PC-3 (cell line): ENCODE measurements at regions of chr2 and their contacts with region 1.

Region 1: DNA sequence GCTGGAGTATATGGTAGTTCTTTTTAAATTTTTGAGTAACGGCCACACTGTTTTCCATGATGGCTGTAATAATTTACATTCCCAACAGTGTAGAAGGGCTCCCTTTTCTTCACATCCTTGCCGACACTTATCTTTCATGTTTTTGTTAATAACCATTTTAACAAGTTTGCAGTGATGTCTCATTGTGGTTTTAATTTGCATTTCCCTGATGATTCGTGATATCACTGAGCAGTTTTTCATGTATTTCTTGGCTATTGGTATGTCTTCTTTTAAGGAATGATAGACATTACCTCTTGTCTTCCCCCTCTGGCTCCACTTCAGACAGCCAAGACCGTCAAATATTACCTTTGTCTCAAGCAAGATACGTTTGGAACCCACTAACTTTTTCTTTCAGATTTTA is 371.1 kb upstream of the NRP2 start:
- DNase-seq: no peak
- ATAC-seq: no peak
- H3K4me3 ChIP-seq: no peak overlapping the region
- H3K27ac ChIP-seq: no peak overlapping the region
- H3K4me1 ChIP-seq: no peaks in the 10 kb centered on the region
- H3K27me3 ChIP-seq: no peaks in the 10 kb centered on the region
- CTCF ChIP-seq: no peak

Region 2: DNA sequence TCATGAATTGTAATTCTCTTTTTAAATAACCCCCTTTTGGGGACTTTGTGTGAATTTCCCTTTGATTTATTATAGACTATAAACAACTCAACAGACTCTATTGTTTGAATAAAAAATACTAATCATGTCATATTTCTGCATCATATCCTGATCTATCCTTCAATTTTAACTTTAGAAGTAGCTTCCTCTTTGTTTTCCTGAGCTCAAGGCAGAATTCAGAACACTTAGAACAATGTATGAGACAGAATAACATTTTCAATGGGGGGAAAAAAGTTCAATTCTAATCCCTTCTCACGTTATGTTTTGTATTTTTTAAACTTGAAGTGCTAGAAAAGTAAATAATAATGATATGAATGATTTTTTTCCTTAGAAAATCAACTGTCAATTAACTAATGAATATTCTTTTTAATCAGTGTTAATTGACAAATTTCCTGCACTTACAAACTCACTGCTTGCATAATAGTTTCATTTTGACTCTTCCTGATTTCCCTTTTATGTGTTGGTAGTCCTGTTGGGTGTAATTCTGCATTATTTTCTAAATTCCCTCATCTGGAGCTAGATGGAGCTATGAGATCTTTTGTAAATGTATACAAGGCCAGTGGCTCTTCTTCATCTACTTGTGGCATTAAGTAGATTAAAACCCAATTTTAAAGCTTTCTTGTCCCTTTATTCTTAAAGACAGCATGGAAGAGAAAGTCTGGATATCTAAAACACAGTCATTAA is 439.8 kb before region 1 on chr2:
- CTCF ChIA-PET with region 1: no interaction called
- POLR2A ChIA-PET with region 1: no interaction called
- intact Hi-C with region 1: loop called (anchors 10 kb)
- DNase-seq: peak; percentile 57
- ATAC-seq: peak; percentile 80
- H3K4me3 ChIP-seq: no peak overlapping the region
- H3K27ac ChIP-seq: no peak overlapping the region
- H3K4me1 ChIP-seq: no peaks in the 10 kb centered on the region
- H3K27me3 ChIP-seq: no peaks in the 10 kb centered on the region
- CTCF ChIP-seq: peak; percentile 67

Region 3: GRCh38 chr2:204892506-204893255 is 418.5 kb before region 1 on chr2:
- CTCF ChIA-PET with region 1: no interaction called
- POLR2A ChIA-PET with region 1: no interaction called
- intact Hi-C with region 1: no loop called
- DNase-seq: peak; percentile 24
- ATAC-seq: no peak
- H3K4me3 ChIP-seq: no peak overlapping the region
- H3K27ac ChIP-seq: no peak overlapping the region
- H3K4me1 ChIP-seq: no peaks in the 10 kb centered on the region
- H3K27me3 ChIP-seq: no peaks in the 10 kb centered on the region
- CTCF ChIP-seq: no peak

Region 4: GRCh38 chr2:205161156-205161839 is 149.9 kb before region 1 on chr2:
- CTCF ChIA-PET with region 1: no interaction called
- POLR2A ChIA-PET with region 1: no interaction called
- intact Hi-C with region 1: no loop called
- DNase-seq: no peak
- ATAC-seq: peak; percentile 50; the same call in 1 of the 2 replicates
- H3K4me3 ChIP-seq: no peak overlapping the region
- H3K27ac ChIP-seq: no peak overlapping the region
- H3K4me1 ChIP-seq: no peaks in the 10 kb centered on the region
- H3K27me3 ChIP-seq: no peaks in the 10 kb centered on the region
- CTCF ChIP-seq: no peak

Region 5: DNA sequence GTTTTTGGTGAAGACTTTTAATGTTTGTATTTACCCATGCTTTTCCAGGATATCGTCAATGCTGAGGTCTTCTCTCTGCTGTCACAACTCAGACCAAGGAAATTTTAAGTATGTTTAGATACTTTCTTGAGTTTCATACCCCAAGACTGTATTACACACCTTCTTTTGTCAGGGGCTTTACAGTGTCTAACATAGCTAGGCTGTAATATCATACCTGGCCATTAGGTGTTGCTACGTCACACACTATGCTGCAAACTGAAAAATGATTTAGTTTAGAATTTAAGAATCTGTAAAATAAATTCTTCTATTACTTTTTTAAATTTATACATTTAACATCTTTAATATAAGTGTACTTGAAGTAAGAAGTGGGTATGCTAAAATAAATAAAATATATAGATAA is 12.7 kb after region 1 on chr2:
- CTCF ChIA-PET with region 1: no interaction called
- POLR2A ChIA-PET with region 1: no interaction called
- intact Hi-C with region 1: no loop called
- DNase-seq: peak; percentile 54
- ATAC-seq: peak; percentile 53; the same call in 1 of the 2 replicates
- H3K4me3 ChIP-seq: no peak overlapping the region
- H3K27ac ChIP-seq: no peak overlapping the region
- H3K4me1 ChIP-seq: no peaks in the 10 kb centered on the region
- H3K27me3 ChIP-seq: no peaks in the 10 kb centered on the region
- CTCF ChIP-seq: peak; percentile 65

Region 6: DNA sequence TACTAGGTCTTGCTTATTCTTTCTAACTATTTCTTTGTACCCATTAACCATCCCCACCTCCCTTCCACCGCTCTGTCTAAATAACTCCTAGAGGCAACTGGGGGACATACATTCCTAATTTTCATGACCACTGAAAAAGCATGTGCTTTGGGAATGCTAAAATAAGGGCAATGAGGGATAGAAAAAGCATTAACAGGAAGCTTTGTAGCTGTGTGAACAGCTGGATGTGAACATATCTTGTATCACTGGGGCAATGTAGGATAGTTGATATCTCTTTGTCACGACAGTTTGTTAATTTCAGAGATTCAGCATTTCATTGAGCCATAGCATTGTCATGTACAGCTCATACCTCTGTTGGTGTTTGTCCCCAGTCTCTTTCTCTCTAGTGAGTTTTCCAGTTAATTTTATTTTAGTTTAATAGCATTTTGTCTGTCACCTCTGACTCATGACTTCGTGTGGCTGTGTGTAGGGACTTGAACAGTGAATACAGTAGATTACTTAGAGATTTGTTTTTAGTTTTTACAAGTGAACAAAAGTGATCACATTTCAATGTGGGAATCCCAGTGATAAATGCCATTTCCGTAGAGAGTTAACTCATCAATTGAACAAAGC is 140.8 kb after region 1 on chr2:
- CTCF ChIA-PET with region 1: no interaction called
- POLR2A ChIA-PET with region 1: no interaction called
- intact Hi-C with region 1: no loop called
- DNase-seq: peak; percentile 16
- ATAC-seq: peak; percentile 65
- H3K4me3 ChIP-seq: no peak overlapping the region
- H3K27ac ChIP-seq: no peak overlapping the region
- H3K4me1 ChIP-seq: no peaks in the 10 kb centered on the region
- H3K27me3 ChIP-seq: no peaks in the 10 kb centered on the region
- CTCF ChIP-seq: no peak